GM10248 (cell line): ENCODE measurements at regions of chr17 and their contacts with region 1.

Region 1: GRCh38 chr17:78082988-78083387 is 45.6 kb downstream of the TMC6 start:
- DNase-seq: no peak
- CTCF ChIP-seq: no peak

Region 2: GRCh38 chr17:78063489-78063888 is 19.5 kb before region 1 on chr17:
- CTCF ChIA-PET with region 1: interaction called, 11 read pairs
- POLR2A ChIA-PET with region 1: no interaction called
- DNase-seq: no peak
- CTCF ChIP-seq: no peak

Region 3: DNA sequence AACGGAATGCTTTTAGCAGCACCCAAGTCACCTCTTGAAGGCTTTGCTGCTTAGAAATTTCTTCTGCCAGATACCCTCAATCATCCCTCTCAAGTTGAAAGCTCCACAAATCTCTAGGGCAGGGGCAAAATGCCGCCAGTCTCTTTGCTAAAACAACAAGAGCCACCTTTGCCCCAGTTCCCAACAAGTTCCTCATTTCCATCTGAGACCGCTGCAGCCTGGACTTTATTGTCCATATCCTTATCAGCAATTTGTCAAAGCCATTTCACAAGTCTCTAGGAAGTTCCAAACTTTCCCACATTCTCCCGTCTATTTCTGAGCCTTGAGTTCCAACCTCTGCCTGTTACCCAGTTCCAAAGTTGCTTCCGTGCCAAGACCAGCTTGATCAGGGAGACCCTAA is 18.1 kb after region 1 on chr17:
- CTCF ChIA-PET with region 1: interaction called, 55 read pairs
- POLR2A ChIA-PET with region 1: no interaction called
- DNase-seq: no peak
- CTCF ChIP-seq: no peak

Region 4: GRCh38 chr17:78112518-78113226 is 29.7 kb after region 1 on chr17:
- CTCF ChIA-PET with region 1: interaction called, 14 read pairs
- POLR2A ChIA-PET with region 1: no interaction called
- DNase-seq: peak; percentile 89
- CTCF ChIP-seq: peak; percentile 97

Region 5: GRCh38 chr17:78133971-78134898 is 51.2 kb after region 1 on chr17:
- CTCF ChIA-PET with region 1: interaction called, 13 read pairs
- POLR2A ChIA-PET with region 1: no interaction called
- DNase-seq: peak; percentile 72
- CTCF ChIP-seq: peak; percentile 72

Region 6: GRCh38 chr17:78421484-78422266 is 338.7 kb after region 1 on chr17:
- CTCF ChIA-PET with region 1: interaction called, 11 read pairs
- POLR2A ChIA-PET with region 1: no interaction called
- DNase-seq: peak; percentile 88
- CTCF ChIP-seq: peak; percentile 98